ENCODE measurements at regions of chr6 and their contacts with region 1.

Region 1: GRCh38 chr6:149082286-149082707 is 235.2 kb upstream of the TAB2 start:
- DNase-seq: peak; percentile 52
- H3K4me3 ChIP-seq: no peak overlapping the region
- H3K27ac ChIP-seq: no peak overlapping the region
- H3K4me1 ChIP-seq: peaks cover 15% of the 10 kb centered on the region
- H3K27me3 ChIP-seq: no peaks in the 10 kb centered on the region
- CTCF ChIP-seq: peak; percentile 79 to 81

Region 2: DNA sequence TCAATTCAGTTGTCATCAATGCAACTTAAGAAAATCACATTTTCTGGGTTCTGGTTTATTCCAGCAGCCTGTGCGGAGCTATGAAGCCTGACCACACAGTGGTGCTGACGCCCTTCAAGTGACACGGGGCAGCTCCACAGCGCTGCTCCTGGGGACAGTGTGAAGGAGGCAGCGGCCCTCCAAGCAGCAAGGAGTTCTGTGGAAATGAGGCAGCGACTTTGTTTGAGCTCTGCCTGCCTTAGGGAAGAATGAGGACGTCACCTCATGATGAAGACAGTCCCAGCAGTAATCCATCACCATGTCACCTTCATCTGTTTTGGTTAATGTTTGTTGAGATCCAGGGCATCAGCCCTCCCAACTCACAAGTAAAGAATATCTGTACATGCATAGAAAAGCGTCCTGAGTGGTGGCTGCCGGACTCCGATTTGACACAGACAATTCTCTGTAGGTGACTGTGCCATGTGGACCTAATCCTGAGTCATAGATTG is 504.0 kb before region 1 on chr6:
- CTCF ChIA-PET with region 1: no interaction called
- dilution Hi-C with region 1: no loop called
- in situ Hi-C with region 1: no loop called
- intact Hi-C with region 1: loop called (anchors 5 kb)
- DNase-seq: peak; percentile 53
- H3K4me3 ChIP-seq: no peak overlapping the region
- H3K27ac ChIP-seq: no peak overlapping the region
- H3K4me1 ChIP-seq: no peaks in the 10 kb centered on the region
- H3K27me3 ChIP-seq: no peaks in the 10 kb centered on the region
- CTCF ChIP-seq: peak; percentile 64 to 95

Region 3: DNA sequence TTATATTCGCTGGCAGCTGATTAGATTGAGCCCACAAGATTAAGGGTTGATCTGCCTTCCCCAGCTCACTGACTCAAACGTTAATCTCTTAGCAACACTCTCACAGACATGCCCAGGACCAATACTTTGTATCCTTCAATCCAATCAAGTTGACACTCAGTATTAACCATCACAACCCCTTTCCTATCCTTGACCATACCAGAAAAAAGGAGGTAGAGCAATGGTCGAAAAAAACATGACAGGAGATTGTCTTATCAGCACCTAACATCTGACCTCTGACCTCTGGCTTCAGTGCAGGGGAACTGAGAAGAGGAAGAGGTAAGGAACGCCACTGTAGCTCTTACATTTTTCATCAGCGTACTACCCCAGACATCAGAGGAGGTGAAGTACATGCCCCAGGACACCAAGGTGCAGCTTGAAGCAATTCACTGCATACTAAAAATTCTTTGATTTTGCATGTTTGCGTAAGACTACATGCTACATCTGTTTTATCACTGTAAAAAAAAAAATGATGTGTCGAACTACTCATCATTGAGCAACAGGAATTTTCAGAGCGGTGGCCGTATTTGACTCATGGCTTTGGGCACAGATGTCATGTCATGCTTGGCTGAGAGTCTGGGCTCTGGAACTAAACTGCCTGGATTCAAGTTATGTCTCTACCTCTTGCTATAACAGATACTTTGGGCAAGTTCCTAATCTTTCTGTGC is 47.2 kb after region 1 on chr6:
- CTCF ChIA-PET with region 1: no interaction called
- dilution Hi-C with region 1: loop called (anchors 5 kb)
- in situ Hi-C with region 1: no loop called
- intact Hi-C with region 1: no loop called
- DNase-seq: peak; percentile 73
- H3K4me3 ChIP-seq: no peak overlapping the region
- H3K27ac ChIP-seq: no peak overlapping the region
- H3K4me1 ChIP-seq: peaks cover 3% of the 10 kb centered on the region
- H3K27me3 ChIP-seq: no peaks in the 10 kb centered on the region
- CTCF ChIP-seq: no peak

Region 4: DNA sequence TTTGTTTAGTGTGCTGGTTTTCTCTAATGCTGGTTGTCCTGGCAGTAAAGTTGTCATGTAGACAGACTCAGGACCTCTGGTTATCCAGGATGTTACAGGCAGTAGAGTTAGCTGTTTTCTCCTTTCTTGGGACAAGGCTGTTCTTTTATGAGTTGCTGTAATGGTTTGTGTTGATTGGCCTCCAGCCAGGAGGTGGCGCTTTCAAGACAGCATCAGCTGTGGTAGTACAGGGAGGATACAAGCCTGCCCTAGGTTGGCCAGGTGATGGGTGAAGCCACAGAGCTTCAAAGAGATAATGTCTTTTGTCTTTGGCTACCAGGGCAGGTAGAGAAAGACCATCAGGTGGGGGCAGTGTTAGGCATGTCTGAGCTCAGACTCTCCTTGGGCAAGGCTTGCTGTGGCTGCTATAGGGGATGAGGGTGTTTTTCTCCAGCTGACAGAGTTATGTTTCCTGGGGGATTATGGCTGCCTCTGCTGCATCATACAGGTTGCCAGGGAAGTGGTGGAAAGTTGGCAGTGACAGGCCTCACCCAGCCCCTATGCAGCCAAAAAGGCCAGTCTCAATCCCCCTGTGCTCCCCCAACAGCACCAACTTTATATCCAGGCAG is 108.0 kb after region 1 on chr6:
- CTCF ChIA-PET with region 1: no interaction called
- dilution Hi-C with region 1: no loop called
- in situ Hi-C with region 1: no loop called
- intact Hi-C with region 1: loop called (anchors 1 kb)
- DNase-seq: peak; percentile 57
- H3K4me3 ChIP-seq: no peak overlapping the region
- H3K27ac ChIP-seq: no peak overlapping the region
- H3K4me1 ChIP-seq: no peaks in the 10 kb centered on the region
- H3K27me3 ChIP-seq: no peaks in the 10 kb centered on the region
- CTCF ChIP-seq: peak; percentile 40 to 59

Region 5: GRCh38 chr6:149513915-149514314 is 431.6 kb after region 1 on chr6:
- CTCF ChIA-PET with region 1: no interaction called
- dilution Hi-C with region 1: no loop called
- in situ Hi-C with region 1: no loop called
- intact Hi-C with region 1: loop called (anchors 1 kb)
- DNase-seq: no peak
- H3K4me3 ChIP-seq: no peak overlapping the region
- H3K27ac ChIP-seq: no peak overlapping the region
- H3K4me1 ChIP-seq: no peaks in the 10 kb centered on the region
- H3K27me3 ChIP-seq: no peaks in the 10 kb centered on the region
- CTCF ChIP-seq: no peak

Measured in mammary epithelial cell (primary cell).